Activated CD8-positive, alpha-beta memory T cell treated with anti-CD3 and anti-CD28 coated beads, Interleukin-2, amount 10 ng/mL, durations not matched to agents 7 days and 5 days (primary cell): ENCODE measurements at regions of chr5 and their contacts with region 1.

Region 1: DNA sequence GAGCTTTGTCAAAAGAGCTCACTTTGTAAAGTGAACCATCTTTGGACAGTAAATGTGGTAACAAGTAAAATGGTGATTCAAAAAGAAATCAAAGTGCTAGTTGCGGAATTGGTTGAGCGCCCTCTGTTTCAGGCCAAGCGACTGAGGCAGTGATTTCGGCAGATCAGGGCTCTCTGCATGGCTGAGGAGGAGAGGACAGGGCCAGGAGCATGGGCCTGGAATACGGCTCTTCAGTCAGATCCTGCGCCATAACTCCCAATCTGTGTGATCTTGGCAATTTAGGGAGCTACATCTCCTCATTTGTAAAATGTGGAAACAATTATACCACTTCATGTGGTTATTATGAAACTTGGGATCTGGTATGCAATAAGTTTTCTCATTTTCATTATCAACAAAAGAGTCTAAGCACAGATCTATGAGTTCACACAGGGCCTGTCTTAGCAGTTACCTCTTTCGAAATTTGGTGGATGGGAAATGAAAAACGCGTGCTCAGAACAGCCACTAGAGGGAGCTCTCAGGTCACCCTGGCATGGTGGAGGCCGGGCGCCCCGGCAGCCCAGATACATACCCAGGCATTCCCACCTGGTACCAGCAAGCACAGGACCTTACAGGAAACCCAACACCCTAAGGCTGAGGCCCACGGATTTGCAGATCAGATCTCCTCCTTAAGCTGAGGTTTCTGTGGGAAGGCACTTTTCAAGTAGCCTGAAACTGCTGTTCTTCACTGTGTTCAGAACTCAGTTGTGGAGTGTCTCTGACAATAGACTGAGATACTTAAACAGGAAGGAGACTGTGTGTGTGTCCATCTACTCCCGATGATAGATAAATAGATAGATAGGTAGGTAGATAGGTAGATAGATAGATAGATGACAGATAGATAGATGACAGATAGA is 303.7 kb downstream of the RAB3C start:
- DNase-seq: peak; percentile 77
- ATAC-seq: peak; percentile 87
- H3K4me3 Mint-ChIP-seq: no peak overlapping the region
- H3K27ac Mint-ChIP-seq: peak overlapping the region; percentile 67
- H3K4me1 Mint-ChIP-seq: peaks cover 39% of the 10 kb centered on the region
- H3K27me3 Mint-ChIP-seq: peaks cover 15% of the 10 kb centered on the region

Region 2: DNA sequence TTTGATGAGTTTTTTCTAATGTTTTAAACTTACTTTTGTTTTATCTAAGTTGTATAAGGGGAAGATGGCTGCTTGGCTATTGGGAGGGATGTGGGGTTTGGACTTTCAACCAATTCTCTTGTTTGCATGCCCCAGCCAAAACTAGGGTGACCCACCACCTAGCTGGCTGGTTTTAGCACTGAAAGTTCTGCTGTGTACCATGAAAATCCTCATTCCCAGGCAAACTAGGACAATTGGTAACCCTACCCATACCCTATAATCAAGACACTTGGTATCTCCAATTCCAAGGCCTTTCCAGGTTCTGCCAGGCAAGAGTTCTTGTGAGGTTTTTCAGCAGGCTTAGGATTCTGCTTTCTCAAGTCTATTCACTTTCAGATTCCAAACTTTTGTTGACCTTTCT is 290.6 kb before region 1 on chr5:
- CTCF ChIA-PET with region 1: no interaction called
- DNase-seq: no peak
- ATAC-seq: no peak
- H3K4me3 Mint-ChIP-seq: no peak overlapping the region
- H3K27ac Mint-ChIP-seq: no peak overlapping the region
- H3K4me1 Mint-ChIP-seq: no peaks in the 10 kb centered on the region
- H3K27me3 Mint-ChIP-seq: no peaks in the 10 kb centered on the region

Region 3: GRCh38 chr5:58871648-58872242 is 14.8 kb before region 1 on chr5:
- CTCF ChIA-PET with region 1: interaction called, 28 read pairs
- DNase-seq: no peak
- ATAC-seq: no peak
- H3K4me3 Mint-ChIP-seq: no peak overlapping the region
- H3K27ac Mint-ChIP-seq: no peak overlapping the region
- H3K4me1 Mint-ChIP-seq: no peaks in the 10 kb centered on the region
- H3K27me3 Mint-ChIP-seq: peaks cover 46% of the 10 kb centered on the region

Region 4: GRCh38 chr5:59039296-59040023 is 152.9 kb after region 1 on chr5:
- CTCF ChIA-PET with region 1: interaction called, 12 read pairs
- DNase-seq: peak; percentile 97
- ATAC-seq: peak; percentile 81
- H3K4me3 Mint-ChIP-seq: peak overlapping the region; percentile 89
- H3K27ac Mint-ChIP-seq: peak overlapping the region; percentile 98
- H3K4me1 Mint-ChIP-seq: peaks cover 47% of the 10 kb centered on the region
- H3K27me3 Mint-ChIP-seq: no peaks in the 10 kb centered on the region

Region 5: DNA sequence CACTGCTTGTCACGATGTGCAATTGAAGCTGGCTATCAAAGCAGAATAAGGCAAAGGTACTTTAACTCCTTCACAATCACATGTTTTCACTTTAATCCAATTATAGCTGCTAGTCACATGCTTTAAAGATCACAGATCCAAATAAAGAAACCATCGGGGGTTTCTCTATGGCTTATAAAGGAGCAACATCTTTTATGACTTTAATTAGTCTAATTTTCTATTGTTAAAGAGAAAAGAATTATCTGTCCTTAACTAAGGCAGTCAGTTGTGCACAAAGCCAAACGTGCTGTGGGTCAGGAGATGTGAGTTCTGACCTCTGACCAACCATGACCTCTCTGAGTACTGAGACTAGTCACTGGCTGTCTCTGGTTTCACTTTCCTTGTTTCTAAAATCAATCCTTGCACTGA is 257.4 kb after region 1 on chr5:
- CTCF ChIA-PET with region 1: no interaction called
- DNase-seq: no peak
- ATAC-seq: peak; percentile 70
- H3K4me3 Mint-ChIP-seq: no peak overlapping the region
- H3K27ac Mint-ChIP-seq: no peak overlapping the region
- H3K4me1 Mint-ChIP-seq: peaks cover 11% of the 10 kb centered on the region
- H3K27me3 Mint-ChIP-seq: no peaks in the 10 kb centered on the region

Region 6: GRCh38 chr5:59174248-59174844 is 287.8 kb after region 1 on chr5:
- CTCF ChIA-PET with region 1: interaction called, 47 read pairs
- DNase-seq: peak; percentile 57
- ATAC-seq: peak; percentile 77
- H3K4me3 Mint-ChIP-seq: no peak overlapping the region
- H3K27ac Mint-ChIP-seq: no peak overlapping the region
- H3K4me1 Mint-ChIP-seq: peaks cover 40% of the 10 kb centered on the region
- H3K27me3 Mint-ChIP-seq: no peaks in the 10 kb centered on the region

Region 7: GRCh38 chr5:59188419-59189225 is 302.1 kb after region 1 on chr5:
- CTCF ChIA-PET with region 1: interaction called, 49 read pairs
- DNase-seq: peak; percentile 75
- ATAC-seq: peak; percentile 78
- H3K4me3 Mint-ChIP-seq: peak overlapping the region; percentile 21
- H3K27ac Mint-ChIP-seq: no peak overlapping the region
- H3K4me1 Mint-ChIP-seq: peaks cover 13% of the 10 kb centered on the region
- H3K27me3 Mint-ChIP-seq: peaks cover 42% of the 10 kb centered on the region